ENCODE measurements at regions of chr14 and their contacts with region 1.

Region 1: DNA sequence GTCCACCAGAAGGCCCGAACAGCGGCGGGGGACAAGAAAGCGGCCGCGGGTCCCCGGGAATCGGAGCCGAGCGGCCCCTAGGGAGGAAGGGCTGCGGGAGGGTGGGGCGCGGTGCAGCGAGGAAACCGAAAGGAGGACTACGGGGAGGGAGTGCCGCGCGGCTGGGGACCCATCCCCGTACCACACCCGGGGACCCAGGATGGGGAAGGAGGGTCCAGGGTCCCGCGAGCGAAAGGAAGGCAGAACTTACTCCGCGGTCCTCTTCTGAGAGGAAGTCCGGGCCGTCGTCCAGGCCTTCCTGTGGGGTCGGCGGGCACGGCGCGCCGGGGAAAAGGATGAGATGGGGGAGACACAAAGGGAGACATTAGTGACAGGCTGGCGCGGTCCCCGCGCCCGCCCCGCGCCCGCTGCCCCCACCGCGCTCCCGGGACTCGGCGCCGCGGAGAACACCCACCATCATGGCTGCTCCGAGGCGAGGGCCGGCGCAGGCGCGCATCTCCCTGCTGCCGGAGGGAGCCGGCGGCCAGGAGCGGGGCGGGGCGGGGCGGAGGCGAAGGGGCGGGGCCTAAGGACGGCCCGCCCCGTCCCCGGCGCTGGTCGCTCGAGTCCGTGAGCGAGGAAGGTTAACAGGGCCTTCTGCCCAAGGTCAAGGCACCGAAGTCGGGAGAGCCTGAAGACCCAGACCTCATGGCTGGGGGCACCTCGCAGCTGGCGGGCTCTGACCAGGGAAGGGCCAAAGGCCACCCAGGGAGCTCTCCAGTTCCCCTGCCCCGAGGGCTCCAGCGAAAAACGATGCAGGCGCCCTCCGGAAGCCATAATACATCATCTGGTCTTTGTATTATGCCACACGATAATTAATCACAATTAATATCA is at the start of gene SNX6:
- DNase-seq: peak; percentile 78 to 88
- ATAC-seq: peak; percentile 96 to 99 (median 98)
- H3K4me3 ChIP-seq: peak within 1 kb of the TSS; percentile 60 to 99 (median 81)
- H3K27ac ChIP-seq: peak within 1 kb of the TSS; percentile 71 to 99 (median 96)
- H3K4me1 ChIP-seq: peaks cover 4 to 45% (median 26%) of the 10 kb centered on the region in 9 donors
- H3K27me3 ChIP-seq: no peaks in the 10 kb centered on the region
- CTCF ChIP-seq: no peak
- total RNA-seq, gene SNX6: 47.6 to 89.8 (median 58.7) TPM

Region 2: GRCh38 chr14:34593740-34594375 is 36.0 kb before region 1 on chr14:
- intact Hi-C with region 1: no loop called
- DNase-seq: no peak
- ATAC-seq: no peak
- H3K4me3 ChIP-seq: no peak overlapping the region
- H3K27ac ChIP-seq: peak overlapping the region in 3 of 10 donors; percentile 30 to 73 (median 68)
- H3K4me1 ChIP-seq: peaks cover 0 to 12% (median 3%) of the 10 kb centered on the region in 9 donors
- H3K27me3 ChIP-seq: no peaks in the 10 kb centered on the region
- CTCF ChIP-seq: no peak

Region 3: GRCh38 chr14:34714320-34715126 is 84.6 kb after region 1 on chr14 and contains the start of gene CFL2:
- intact Hi-C with region 1: loop called in 1 of 10 experiments (anchors 5 kb)
- DNase-seq: peak; percentile 85 to 88
- ATAC-seq: peak; percentile 92 to 99 (median 95)
- H3K4me3 ChIP-seq: peak within 1 kb of the TSS; percentile 78 to 94 (median 86)
- H3K27ac ChIP-seq: peak within 1 kb of the TSS; percentile 94 to 100 (median 98)
- H3K4me1 ChIP-seq: peaks cover 0 to 48% (median 32%) of the 10 kb centered on the region in 9 donors
- H3K27me3 ChIP-seq: no peaks in the 10 kb centered on the region
- CTCF ChIP-seq: no peak
- total RNA-seq, gene CFL2: 345 to 918 (median 571) TPM

Region 4: GRCh38 chr14:34982417-34983147 is 352.7 kb after region 1 on chr14 and contains the start of gene SRP54:
- intact Hi-C with region 1: loop called in 1 of 10 experiments (anchors 10 kb)
- DNase-seq: peak; percentile 98
- ATAC-seq: peak; percentile 96 to 98 (median 98)
- H3K4me3 ChIP-seq: peak within 1 kb of the TSS; percentile 49 to 94 (median 79)
- H3K27ac ChIP-seq: peak within 1 kb of the TSS; percentile 82 to 99 (median 96)
- H3K4me1 ChIP-seq: peaks cover 0 to 52% (median 38%) of the 10 kb centered on the region in 9 donors
- H3K27me3 ChIP-seq: no peaks in the 10 kb centered on the region
- CTCF ChIP-seq: peak in 1 of 9 donors; percentile 26
- total RNA-seq, gene SRP54: 29.2 to 38.2 (median 34.6) TPM